ENCODE measurements at regions of chr2 and their contacts with region 1.

Region 1: GRCh38 chr2:47056875-47057686 is 98.0 kb downstream of the STPG4 start:
- DNase-seq: no peak
- ATAC-seq: peak; percentile 82
- H3K4me3 ChIP-seq: peak overlapping the region in 3 of 5 experiments; percentile 1 to 41 (median 5)
- H3K4me3 Mint-ChIP-seq: peak overlapping the region; percentile 86
- H3K27ac ChIP-seq: peak overlapping the region; percentile 86 to 87
- H3K27ac Mint-ChIP-seq: peak overlapping the region; percentile 98
- H3K4me1 ChIP-seq: peaks cover 39 to 43% of the 10 kb centered on the region in 2 donors
- H3K4me1 Mint-ChIP-seq: peaks cover 46% of the 10 kb centered on the region
- H3K27me3 ChIP-seq: no peaks in the 10 kb centered on the region
- H3K27me3 Mint-ChIP-seq: no peaks in the 10 kb centered on the region
- CTCF ChIP-seq: no peak

Region 2: DNA sequence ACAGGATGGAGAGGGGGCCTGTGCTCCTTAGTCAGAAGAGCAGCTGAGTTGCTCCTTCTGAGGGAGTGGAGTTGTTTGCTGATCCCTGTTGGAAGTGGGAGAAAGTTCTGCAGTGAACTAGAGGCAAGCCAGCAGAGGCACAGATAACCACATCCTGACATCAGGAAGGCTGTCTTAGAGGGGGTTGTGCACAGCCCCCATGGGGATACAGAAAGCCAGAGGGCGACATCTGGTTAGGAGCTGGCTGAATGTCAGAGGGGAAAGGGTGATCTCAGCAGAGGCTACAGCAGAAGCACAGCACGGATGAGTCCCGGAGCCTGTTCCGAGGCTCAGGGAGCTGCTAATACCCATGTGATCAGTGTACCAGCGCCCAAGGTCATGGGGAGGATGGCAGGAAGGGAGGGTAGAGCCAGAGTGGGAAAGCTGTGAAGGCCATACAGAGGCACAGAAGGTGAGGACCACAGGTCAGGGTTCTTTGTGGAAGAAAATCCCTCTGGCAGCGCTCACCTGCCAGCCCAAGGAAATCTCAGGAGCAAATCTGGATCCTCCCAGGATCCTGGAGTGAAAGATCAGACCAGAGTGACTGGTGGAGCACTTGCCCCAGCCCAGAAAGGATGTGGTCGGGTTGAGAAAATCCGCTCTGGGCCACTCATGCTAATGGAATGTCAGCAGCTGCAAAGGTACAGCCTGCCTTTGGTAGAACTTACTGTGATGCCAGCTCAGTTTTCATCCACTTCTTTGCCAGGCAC is 13.8 kb before region 1 on chr2:
- CTCF ChIA-PET with region 1: no interaction called
- POLR2A ChIA-PET with region 1: no interaction called
- intact Hi-C with region 1: no loop called
- DNase-seq: no peak
- ATAC-seq: no peak
- H3K4me3 ChIP-seq: no peak overlapping the region
- H3K4me3 Mint-ChIP-seq: no peak overlapping the region
- H3K27ac ChIP-seq: peak overlapping the region in 1 of 2 donors; percentile 32
- H3K27ac Mint-ChIP-seq: peak overlapping the region; percentile 63
- H3K4me1 ChIP-seq: peaks cover 29 to 34% of the 10 kb centered on the region in 2 donors
- H3K4me1 Mint-ChIP-seq: peaks cover 39% of the 10 kb centered on the region
- H3K27me3 ChIP-seq: no peaks in the 10 kb centered on the region
- H3K27me3 Mint-ChIP-seq: no peaks in the 10 kb centered on the region
- CTCF ChIP-seq: no peak

Region 3: DNA sequence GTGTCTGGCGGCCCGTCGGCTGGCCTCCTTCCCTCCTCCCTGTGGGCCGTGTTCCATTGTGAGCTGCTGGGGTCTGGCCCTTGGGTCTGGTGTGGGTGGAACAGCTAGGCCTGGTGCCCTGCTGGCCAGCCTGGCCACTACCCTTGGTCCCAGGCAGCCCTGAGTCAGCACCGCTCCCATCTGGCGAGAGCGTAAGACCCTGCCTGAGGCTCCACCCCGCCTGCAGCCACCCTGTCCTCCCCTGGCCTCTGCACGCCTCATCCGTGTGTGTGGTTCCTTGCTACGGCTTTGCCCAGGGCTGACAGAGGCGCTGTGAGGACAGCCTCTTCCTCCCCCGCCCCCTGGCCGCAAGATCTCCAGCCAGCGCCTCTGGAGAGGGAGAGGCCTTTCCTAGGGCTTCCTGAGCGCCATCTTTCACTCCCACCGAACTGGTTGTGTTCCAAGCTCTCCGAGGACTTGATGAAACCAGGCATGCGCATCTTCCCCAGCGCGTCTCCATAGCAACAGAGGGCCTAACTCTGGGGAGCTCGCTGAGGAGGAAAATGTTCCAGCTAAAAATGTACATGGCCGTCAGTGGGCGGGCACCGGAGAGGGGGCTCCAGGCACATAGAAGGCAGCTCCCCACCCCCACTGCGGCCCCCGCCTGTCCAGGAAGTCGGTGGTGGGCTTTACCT is 15.1 kb after region 1 on chr2:
- CTCF ChIA-PET with region 1: interaction called, 3 read pairs
- POLR2A ChIA-PET with region 1: no interaction called
- intact Hi-C with region 1: loop called (anchors 2 kb)
- DNase-seq: peak; percentile 36
- ATAC-seq: no peak
- H3K4me3 ChIP-seq: peak overlapping the region in 1 of 5 experiments; percentile 6
- H3K4me3 Mint-ChIP-seq: peak overlapping the region; percentile 77
- H3K27ac ChIP-seq: peak overlapping the region; percentile 92 to 96
- H3K27ac Mint-ChIP-seq: peak overlapping the region; percentile 98
- H3K4me1 ChIP-seq: peaks cover 53 to 57% of the 10 kb centered on the region in 2 donors
- H3K4me1 Mint-ChIP-seq: peaks cover 59% of the 10 kb centered on the region
- H3K27me3 ChIP-seq: no peaks in the 10 kb centered on the region
- H3K27me3 Mint-ChIP-seq: no peaks in the 10 kb centered on the region
- CTCF ChIP-seq: no peak

Region 4: GRCh38 chr2:47088668-47089462 is 31.8 kb after region 1 on chr2:
- CTCF ChIA-PET with region 1: no interaction called
- POLR2A ChIA-PET with region 1: no interaction called
- intact Hi-C with region 1: no loop called
- DNase-seq: no peak
- ATAC-seq: no peak
- H3K4me3 ChIP-seq: no peak overlapping the region
- H3K4me3 Mint-ChIP-seq: no peak overlapping the region
- H3K27ac ChIP-seq: no peak overlapping the region
- H3K27ac Mint-ChIP-seq: no peak overlapping the region
- H3K4me1 ChIP-seq: peaks cover 13 to 23% of the 10 kb centered on the region in 2 donors
- H3K4me1 Mint-ChIP-seq: peaks cover 19% of the 10 kb centered on the region
- H3K27me3 ChIP-seq: no peaks in the 10 kb centered on the region
- H3K27me3 Mint-ChIP-seq: peaks cover 3% of the 10 kb centered on the region
- CTCF ChIP-seq: no peak

Measured in B cell (primary cell).